ENCODE measurements at regions of chr12 and their contacts with region 1.

Region 1: DNA sequence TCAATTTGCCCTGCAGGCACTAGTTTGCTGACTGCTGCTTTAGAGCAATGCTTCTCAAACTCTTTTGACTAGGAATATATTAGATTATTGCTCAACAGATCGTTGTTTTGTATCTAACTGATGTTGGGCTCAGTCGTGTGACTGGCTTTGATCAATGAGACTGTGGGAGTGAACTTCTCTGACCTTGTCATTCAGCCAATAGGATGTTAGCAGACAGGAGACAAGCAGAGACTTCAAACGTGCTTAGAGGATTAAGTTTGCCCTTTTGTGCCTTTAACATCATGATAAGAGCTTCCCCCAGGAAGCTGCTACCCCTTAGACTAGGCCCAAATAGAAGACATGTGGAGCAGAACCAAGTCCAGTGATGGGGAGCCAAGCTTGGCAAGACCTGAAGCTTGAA is 76.7 kb upstream of the ELK3 start:
- DNase-seq: no peak
- H3K4me3 ChIP-seq: no peak overlapping the region
- H3K27ac ChIP-seq: no peak overlapping the region
- H3K4me1 ChIP-seq: no peaks in the 10 kb centered on the region
- H3K27me3 ChIP-seq: no peaks in the 10 kb centered on the region
- CTCF ChIP-seq: no peak

Region 2: GRCh38 chr12:96164951-96165811 is 47.7 kb after region 1 on chr12:
- CTCF ChIA-PET with region 1: no interaction called
- dilution Hi-C with region 1: loop called (anchors 5 kb)
- in situ Hi-C with region 1: no loop called
- intact Hi-C with region 1: no loop called
- DNase-seq: no peak
- H3K4me3 ChIP-seq: no peak overlapping the region
- H3K27ac ChIP-seq: no peak overlapping the region
- H3K4me1 ChIP-seq: no peaks in the 10 kb centered on the region
- H3K27me3 ChIP-seq: no peaks in the 10 kb centered on the region
- CTCF ChIP-seq: no peak

Measured in mammary epithelial cell (primary cell).